Body of pancreas (tissue), 4 donors: ENCODE measurements at regions of chr9 and their contacts with region 1.

Region 1: GRCh38 chr9:128007566-128008138 is 26.9 kb upstream of the EEIG1 start:
- DNase-seq: peak in 3 of 4 donors; percentile 35 to 82 (median 57)
- ATAC-seq: peak; percentile 60
- H3K4me3 ChIP-seq: no peak overlapping the region
- H3K27ac ChIP-seq: peak overlapping the region in 3 of 4 donors; percentile 30 to 65 (median 62)
- H3K4me1 ChIP-seq: peaks cover 12% of the 10 kb centered on the region
- H3K27me3 ChIP-seq: no peaks in the 10 kb centered on the region
- CTCF ChIP-seq: no peak
- POLR2A ChIP-seq: no peak

Region 2: DNA sequence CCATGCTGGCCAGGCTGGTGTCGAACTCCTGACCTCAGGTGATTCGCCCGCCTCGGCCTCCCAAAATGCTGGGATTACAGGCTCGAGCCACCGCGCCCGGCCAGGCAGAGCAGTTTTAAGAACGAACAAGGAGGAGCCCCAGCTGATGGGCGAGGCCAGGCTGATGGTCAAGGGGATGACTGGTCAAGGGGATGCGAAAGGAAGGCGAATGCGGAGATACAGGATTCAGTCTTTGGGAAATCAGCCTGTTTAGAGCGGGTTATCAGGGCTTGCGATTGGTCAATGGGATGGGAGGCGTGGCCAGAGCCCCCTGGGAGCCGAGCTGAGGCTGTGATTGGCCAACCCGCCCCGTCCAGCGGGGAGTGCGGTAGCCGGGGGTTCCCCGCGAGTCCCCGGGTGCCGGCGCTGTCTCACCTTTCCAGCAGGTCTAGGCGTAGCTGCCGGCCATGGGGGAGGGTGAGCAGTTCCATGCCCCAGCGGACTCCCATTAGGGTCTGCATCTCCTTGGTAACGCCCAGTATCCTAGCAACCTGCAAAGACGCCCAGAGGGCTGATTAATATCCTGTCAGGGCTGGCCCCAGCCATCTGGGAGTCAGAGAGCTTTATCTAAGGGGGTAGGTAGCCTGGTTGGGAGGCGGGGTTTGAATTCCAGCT is 265.1 kb before region 1 on chr9:
- intact Hi-C with region 1: loop called (anchors 10 kb)
- DNase-seq: peak; percentile 34 to 67 (median 60)
- ATAC-seq: peak; percentile 41
- H3K4me3 ChIP-seq: no peak overlapping the region
- H3K27ac ChIP-seq: peak overlapping the region in 2 of 4 donors; percentile 24 to 58
- H3K4me1 ChIP-seq: peaks cover 15% of the 10 kb centered on the region
- H3K27me3 ChIP-seq: no peaks in the 10 kb centered on the region
- CTCF ChIP-seq: no peak
- POLR2A ChIP-seq: peak in 1 of 3 donors; percentile 8